SK-N-SH (cell line): ENCODE measurements at regions of chr17 and their contacts with region 1.

Region 1: DNA sequence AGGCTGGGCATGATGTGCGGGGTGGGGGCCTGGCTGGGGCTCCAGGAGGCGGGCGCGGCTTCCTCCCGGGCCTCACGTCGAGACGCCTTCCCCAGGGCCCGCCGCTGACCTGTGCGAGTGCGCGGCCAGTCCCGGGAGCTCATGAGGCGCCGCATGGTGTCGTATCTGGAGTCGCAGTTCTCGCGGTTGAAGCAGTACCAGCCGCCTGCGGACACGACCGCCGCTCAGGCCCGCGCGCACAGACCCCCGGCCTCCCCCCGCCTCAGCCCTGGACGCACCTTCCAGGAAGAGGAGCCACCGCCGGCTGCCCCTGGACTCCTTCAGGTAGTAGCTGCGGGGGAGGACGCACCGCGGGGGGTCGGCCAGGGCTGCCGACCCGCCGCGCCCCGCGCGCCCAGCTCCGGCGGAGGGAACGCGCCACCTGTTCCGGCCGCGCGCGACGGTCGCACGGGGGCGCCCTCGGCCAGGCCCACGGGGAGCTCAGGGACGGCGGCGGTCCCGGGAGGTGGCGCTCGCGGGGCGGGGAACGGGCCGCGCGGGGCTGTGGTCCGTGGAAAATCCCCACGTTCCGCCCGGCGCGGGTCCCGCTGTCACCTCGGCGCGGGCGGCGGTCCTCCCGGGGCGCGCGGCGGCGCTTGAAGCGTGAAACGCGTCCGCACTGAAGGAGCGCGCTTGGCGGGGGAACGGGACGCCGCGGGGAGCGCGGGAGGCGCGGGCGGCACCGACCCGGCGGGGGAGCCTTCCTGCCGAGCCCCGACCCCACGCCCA is 1.4 kb downstream of the NOTUM start:
- DNase-seq: peak; percentile 96
- H3K4me3 ChIP-seq: peak overlapping the region; percentile 40 to 49
- H3K27ac ChIP-seq: no peak overlapping the region
- H3K4me1 ChIP-seq: peaks cover 0 to 25% of the 10 kb centered on the region in 2 experiments; a peak in 1 of 4 replicates
- H3K27me3 ChIP-seq: peaks cover 18% of the 10 kb centered on the region
- CTCF ChIP-seq: peak; percentile 62
- EP300 ChIP-seq: peak in 1 of 2 experiments; percentile 17; a peak in 1 of 4 replicates
- RAD21 ChIP-seq: peak; percentile 92

Region 2: GRCh38 chr17:81871387-81872230 is 87.9 kb before region 1 on chr17:
- CTCF ChIA-PET with region 1: interaction called, 32 read pairs
- POLR2A ChIA-PET with region 1: no interaction called
- DNase-seq: peak; percentile 100
- H3K4me3 ChIP-seq: peak overlapping the region; percentile 82 to 83
- H3K27ac ChIP-seq: peak overlapping the region; percentile 95
- H3K4me1 ChIP-seq: peaks cover 24 to 40% of the 10 kb centered on the region in 2 experiments; a peak in 3 of 4 replicates
- H3K27me3 ChIP-seq: no peaks in the 10 kb centered on the region
- CTCF ChIP-seq: peak; percentile 37; the same call in 1 of the 2 replicates
- EP300 ChIP-seq: 0 out of 4 replicates have a peak, but pooled peaks of 1 of the 2 experiments have one; percentile 6
- RAD21 ChIP-seq: no peak

Region 3: DNA sequence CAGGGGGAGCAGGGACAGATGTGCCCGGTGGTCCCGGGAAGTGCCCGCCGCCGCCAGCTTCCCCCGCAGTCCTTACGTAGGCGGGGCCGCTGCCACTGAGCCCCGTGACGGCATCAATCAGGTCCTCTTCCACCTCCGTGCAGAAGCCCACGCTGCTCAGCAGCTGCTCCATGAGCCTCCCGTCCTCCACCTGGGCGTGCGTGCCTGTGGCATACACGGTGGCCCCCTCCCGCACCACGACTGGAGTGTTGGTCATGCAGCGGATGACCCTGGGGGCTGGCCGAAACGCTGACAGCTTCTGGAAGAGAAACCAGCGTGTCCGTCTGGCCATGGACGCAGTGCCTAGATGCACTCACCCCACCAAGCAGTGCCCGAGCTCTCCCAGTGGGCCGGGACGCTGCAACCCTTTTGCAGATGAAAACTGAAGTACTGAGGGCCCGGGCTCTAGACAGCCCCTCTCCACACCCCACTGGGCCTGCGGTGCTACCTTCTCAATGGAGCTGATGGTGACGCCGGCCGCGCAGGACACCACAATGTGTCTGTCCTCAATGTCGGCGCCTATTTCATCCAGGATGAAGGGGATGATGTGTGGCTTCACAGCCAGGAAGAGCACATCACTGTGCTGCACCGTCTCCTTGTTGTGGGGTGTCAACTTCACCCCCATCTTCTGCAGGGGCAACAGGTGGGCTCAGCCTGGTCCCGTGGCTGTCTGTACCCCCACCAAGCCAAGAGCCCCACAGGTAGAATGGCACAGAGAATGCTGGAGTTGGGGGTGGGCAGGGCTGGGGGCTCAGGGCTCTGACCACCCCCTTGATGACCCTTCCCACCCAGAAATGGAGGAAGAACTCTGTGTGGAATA is 24.5 kb before region 1 on chr17:
- CTCF ChIA-PET with region 1: interaction called, 216 read pairs
- POLR2A ChIA-PET with region 1: interaction called, 11 read pairs
- DNase-seq: no peak
- H3K4me3 ChIP-seq: no peak overlapping the region
- H3K27ac ChIP-seq: no peak overlapping the region
- H3K4me1 ChIP-seq: peaks cover 6 to 19% of the 10 kb centered on the region in 2 experiments; a peak in 2 of 4 replicates
- H3K27me3 ChIP-seq: no peaks in the 10 kb centered on the region
- CTCF ChIP-seq: no peak
- EP300 ChIP-seq: no peak
- RAD21 ChIP-seq: no peak

Region 4: GRCh38 chr17:81991684-81992305 is 32.2 kb after region 1 on chr17:
- CTCF ChIA-PET with region 1: interaction called, 64 read pairs
- POLR2A ChIA-PET with region 1: interaction called, 3 read pairs
- DNase-seq: peak; percentile 81
- H3K4me3 ChIP-seq: no peak overlapping the region
- H3K27ac ChIP-seq: peak overlapping the region in 1 of 2 experiments; percentile 91; a peak in 2 of 4 replicates
- H3K4me1 ChIP-seq: peaks cover 0 to 25% of the 10 kb centered on the region in 2 experiments; a peak in 1 of 4 replicates
- H3K27me3 ChIP-seq: no peaks in the 10 kb centered on the region
- CTCF ChIP-seq: no peak
- EP300 ChIP-seq: no peak
- RAD21 ChIP-seq: peak; percentile 27; the same call in 1 of the 2 replicates

Region 5: DNA sequence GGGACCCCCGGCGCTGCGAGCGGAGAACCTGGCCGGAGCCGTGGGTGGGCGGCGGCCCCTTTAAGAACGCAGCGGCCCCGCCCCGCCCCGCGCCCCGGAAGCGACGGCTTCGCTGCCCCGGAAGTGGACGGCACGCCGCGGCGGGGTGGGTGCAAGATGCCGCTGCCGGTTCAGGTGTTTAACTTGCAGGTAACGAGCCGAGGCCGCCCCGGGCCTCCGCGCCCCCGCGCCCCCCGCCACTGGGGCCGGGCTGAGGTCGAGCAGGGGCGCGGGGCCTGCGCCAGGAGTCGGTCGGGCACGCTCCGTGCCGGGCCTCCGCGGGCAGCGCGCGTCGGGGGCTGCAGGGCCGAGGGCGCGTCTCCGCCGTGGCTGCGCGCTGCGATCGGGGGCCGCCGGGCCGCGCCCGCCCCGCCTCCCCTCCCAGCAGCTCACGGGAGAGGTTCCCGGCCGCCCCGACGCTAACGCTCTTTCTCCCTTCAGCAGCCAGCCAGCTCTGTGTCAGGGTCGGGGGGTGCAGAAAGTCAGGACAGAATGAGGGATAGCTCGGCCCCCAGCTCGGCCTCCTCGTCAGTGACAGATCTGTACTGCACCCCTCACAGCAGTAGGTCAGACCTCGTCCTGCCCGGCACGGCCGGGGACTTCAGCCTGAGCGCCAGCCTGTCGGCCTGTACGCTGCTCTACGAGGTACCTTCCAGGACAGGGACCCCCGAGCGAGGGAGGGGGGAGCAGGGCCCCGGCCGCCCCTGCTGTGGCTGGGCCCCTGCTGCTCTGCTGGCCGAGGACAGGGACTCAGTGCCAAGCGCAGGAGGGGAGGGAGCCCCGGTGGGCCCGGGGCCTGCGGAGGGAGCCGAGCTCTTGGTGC is 92.5 kb after region 1 on chr17 and contains the starts of genes GPS1 and RFNG:
- CTCF ChIA-PET with region 1: interaction called, 18 read pairs
- POLR2A ChIA-PET with region 1: no interaction called
- DNase-seq: peak; percentile 99
- H3K4me3 ChIP-seq: peak within 1 kb of the TSS; percentile 99 to 100
- H3K27ac ChIP-seq: peak within 1 kb of the TSS; percentile 37 to 74; a peak in 3 of 4 replicates
- H3K4me1 ChIP-seq: peaks cover 0 to 25% of the 10 kb centered on the region in 2 experiments; a peak in 2 of 4 replicates
- H3K27me3 ChIP-seq: no peaks in the 10 kb centered on the region
- CTCF ChIP-seq: no peak
- EP300 ChIP-seq: no peak; a peak in 1 of 4 replicates
- RAD21 ChIP-seq: no peak
- polyA plus RNA-seq, gene GPS1: 264 and 272 TPM in 2 replicates
- polyA plus RNA-seq, gene RFNG: 54.4 and 68.6 TPM in 2 replicates

Region 6: DNA sequence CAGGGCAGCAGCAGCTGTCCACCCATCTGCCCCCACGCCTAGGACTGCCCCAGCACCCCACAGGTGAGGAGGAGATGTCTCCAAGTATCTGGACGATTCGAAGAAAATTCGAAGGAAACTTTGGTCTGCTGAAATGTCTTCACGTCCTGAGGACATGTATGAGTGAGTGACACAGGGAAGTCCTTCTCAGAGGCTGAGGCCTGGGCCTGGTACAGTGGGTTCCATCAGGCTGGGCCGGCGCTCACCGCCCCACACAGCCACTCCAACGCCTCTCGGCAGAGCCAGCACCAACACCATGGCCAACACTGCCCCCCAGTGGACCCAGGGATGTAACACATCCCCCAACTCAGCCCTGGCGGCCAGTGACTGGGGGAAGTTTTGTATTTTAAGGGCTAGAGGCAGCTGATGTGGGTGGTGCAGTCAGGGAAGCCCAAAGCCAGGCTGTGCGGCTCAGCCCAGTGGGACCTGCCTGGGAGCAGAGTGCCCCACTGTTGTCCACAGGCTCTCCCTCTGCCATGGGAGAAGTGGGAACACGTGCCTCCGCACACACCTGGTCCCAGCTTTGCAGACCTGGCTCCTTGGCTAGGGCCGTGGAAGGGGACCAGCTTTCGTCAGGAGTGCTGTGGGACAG is 194.3 kb after region 1 on chr17:
- CTCF ChIA-PET with region 1: interaction called, 20 read pairs
- POLR2A ChIA-PET with region 1: no interaction called
- DNase-seq: peak; percentile 97
- H3K4me3 ChIP-seq: no peak overlapping the region; a peak in 1 of 4 replicates
- H3K27ac ChIP-seq: no peak overlapping the region
- H3K4me1 ChIP-seq: no peaks in the 10 kb centered on the region
- H3K27me3 ChIP-seq: no peaks in the 10 kb centered on the region
- CTCF ChIP-seq: peak; percentile 85
- EP300 ChIP-seq: no peak
- RAD21 ChIP-seq: peak; percentile 97